K562 (cell line): ENCODE measurements at regions of chr1 and their contacts with region 1.

Region 1: DNA sequence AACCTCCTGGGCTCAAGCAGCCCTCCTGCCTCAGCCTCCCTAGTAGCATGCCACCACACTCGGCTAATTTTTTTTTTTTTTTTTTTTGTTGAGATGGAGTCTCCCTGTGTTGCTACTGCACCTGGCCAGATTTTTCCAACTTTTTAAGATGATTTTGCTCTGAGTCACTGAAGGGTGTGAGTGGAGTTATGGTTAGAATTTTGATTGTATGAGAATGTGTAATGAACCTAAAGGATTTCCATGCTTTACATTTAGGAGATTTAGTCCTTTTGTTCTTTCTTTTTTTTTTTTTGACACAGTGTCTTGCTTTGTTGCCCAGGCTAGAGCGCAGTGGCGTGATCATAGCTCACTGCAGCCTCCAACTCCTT is 12.3 kb downstream of the SARS1 start:
- DNase-seq: no peak
- ATAC-seq: no peak
- H3K4me3 ChIP-seq: no peak overlapping the region
- H3K27ac ChIP-seq: no peak overlapping the region
- H3K4me1 ChIP-seq: no peaks in the 10 kb centered on the region
- H3K27me3 ChIP-seq: no peaks in the 10 kb centered on the region
- CTCF ChIP-seq: no peak
- EP300 ChIP-seq: no peak
- POLR2A ChIP-seq: no peak
- RAD21 ChIP-seq: no peak

Region 2: DNA sequence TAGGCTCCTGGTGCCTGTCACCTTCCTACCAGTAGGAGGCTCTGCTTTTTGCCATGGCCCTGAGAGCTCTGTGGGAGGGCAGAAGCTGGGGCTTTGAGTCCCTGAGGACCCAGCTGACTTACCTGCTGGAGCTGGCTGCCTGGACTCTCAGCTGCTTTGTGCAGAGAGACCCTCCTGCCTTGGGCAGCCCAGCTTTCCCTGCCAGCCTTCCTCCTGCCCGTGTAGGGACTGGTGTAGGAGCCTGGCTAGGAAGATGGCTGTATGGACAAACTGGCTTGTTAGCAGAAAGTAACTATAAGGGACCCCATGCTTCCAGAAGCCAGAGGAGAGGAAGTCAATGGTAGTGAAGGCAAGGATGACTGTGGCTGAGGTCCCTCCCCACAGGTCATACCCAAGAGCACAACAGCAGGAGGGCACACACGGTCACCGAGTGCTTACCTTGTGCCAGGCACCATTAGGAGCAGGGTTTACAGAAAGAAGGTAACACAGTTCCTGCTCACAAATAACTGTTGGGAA is 13.6 kb after region 1 on chr1:
- CTCF ChIA-PET with region 1: no interaction called
- POLR2A ChIA-PET with region 1: interaction called, 53 read pairs
- in situ Hi-C with region 1: no loop called
- intact Hi-C with region 1: no loop called
- DNase-seq: peak; percentile 72 to 79 (median 78)
- ATAC-seq: peak; percentile 90
- H3K4me3 ChIP-seq: no peak overlapping the region
- H3K27ac ChIP-seq: no peak overlapping the region
- H3K4me1 ChIP-seq: peaks cover 15 to 28% of the 10 kb centered on the region in 2 experiments; a peak in 4 of 5 replicates
- H3K27me3 ChIP-seq: no peaks in the 10 kb centered on the region
- CTCF ChIP-seq: peak; percentile 85 to 91 (median 88)
- EP300 ChIP-seq: no peak
- POLR2A ChIP-seq: peak; percentile 58; the same call in 1 of the 2 replicates
- RAD21 ChIP-seq: peak; percentile 46 to 64

Region 3: DNA sequence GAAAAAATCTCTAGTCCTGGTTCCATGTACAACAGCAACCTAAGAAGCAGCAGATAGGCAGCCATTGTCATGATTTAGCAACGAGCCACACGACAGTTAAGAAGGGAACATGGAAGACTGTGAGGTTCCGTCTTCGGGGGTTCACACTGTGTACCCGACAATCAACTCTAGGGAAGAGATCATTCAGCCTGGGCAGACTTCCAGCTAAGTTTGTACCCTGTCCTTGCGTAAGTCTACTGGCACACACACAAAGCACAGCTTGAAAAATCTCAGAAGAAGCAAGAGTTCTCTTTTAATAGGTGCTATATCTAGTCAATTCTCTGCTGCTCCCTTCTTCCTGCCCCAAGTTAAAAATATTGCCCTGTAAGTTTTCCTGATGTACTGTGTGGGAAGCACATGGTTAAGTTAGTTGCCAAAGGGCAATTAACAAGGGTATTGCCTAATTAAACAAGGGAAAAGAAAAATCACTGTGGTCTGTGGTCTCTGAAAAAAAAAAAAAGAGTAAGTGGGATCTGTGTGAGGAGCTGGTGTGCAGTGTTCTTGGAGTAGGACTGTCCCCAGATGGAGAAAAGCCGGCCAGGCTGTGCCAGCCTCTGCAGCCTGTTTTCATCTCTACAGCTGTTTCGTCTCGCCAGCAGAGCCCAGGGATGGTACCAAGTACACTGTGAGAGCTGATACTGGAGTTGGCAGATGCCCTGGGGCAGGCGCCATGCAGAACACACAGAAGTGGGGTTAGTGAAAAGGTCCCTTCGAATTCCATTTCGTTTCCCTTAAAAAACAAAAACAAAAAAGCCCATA is 87.1 kb after region 1 on chr1:
- CTCF ChIA-PET with region 1: no interaction called
- POLR2A ChIA-PET with region 1: no interaction called
- in situ Hi-C with region 1: no loop called
- intact Hi-C with region 1: no loop called
- DNase-seq: no peak
- ATAC-seq: no peak
- H3K4me3 ChIP-seq: no peak overlapping the region
- H3K27ac ChIP-seq: no peak overlapping the region
- H3K4me1 ChIP-seq: peaks cover 3 to 11% of the 10 kb centered on the region in 2 experiments
- H3K27me3 ChIP-seq: no peaks in the 10 kb centered on the region
- CTCF ChIP-seq: no peak
- EP300 ChIP-seq: no peak
- POLR2A ChIP-seq: no peak
- RAD21 ChIP-seq: no peak

Region 4: GRCh38 chr1:109509176-109510134 is 283.4 kb after region 1 on chr1 and contains the start of gene AMIGO1:
- CTCF ChIA-PET with region 1: no interaction called
- POLR2A ChIA-PET with region 1: no interaction called
- in situ Hi-C with region 1: no loop called
- intact Hi-C with region 1: no loop called
- DNase-seq: peak; percentile 75 to 96 (median 92)
- ATAC-seq: peak; percentile 77
- H3K4me3 ChIP-seq: peak within 1 kb of the TSS; percentile 48
- H3K27ac ChIP-seq: no peak within 1 kb of the TSS
- H3K4me1 ChIP-seq: peaks cover 0 to 19% of the 10 kb centered on the region in 2 experiments; a peak in 4 of 5 replicates
- H3K27me3 ChIP-seq: peaks cover 13 to 45% of the 10 kb centered on the region in 2 experiments
- CTCF ChIP-seq: no peak
- EP300 ChIP-seq: no peak
- POLR2A ChIP-seq: no peak
- RAD21 ChIP-seq: no peak
- polyA plus RNA-seq, gene AMIGO1: 0.24 to 0.31 TPM